MCF 10A (cell line): ENCODE measurements at regions of chr18 and their contacts with region 1.

Region 1: DNA sequence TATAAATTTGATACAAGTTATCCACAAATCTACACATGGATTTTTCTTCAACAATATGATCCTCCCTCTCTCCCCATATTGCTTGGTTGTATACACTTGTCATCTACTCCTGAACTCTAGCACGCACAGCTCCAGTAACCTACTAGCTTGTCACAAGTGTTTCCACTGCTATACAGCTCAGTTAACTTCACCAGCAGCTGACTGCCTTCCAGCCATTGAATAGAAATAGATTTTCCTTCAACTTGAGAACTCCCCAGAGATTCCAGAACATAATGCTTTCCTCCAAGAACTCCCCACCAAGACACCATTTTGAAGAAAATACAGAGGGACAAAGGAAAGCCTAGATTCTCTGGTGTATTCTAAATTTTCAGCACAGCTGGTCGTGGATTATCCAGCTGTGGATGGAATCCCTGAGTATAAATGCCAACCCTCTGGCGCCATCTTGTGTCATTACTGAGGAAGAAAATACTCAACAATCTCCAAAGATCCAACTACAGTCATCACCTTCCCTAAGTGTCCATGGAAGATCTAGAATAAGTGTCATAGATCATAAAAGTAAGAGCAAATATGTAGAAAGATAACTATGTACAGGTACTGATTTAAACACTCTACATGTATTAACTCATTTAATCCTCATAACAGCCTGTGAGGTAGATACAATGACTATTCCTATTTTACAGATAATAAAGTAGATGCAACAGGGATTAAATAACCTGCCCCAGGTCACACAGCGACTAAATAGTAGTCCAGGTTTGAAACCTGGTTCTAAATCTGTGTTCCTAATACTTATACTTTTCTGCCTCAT is 156.7 kb downstream of the ARHGAP28 start:
- DNase-seq: peak; percentile 69
- H3K4me3 Mint-ChIP-seq: no peak overlapping the region
- H3K27ac Mint-ChIP-seq: no peak overlapping the region
- H3K4me1 Mint-ChIP-seq: peaks cover 6% of the 10 kb centered on the region
- H3K27me3 Mint-ChIP-seq: no peaks in the 10 kb centered on the region
- CTCF ChIP-seq: peak; percentile 81

Region 2: GRCh38 chr18:5868218-5869115 is 1017.7 kb before region 1 on chr18:
- CTCF ChIA-PET with region 1: interaction called, 10 read pairs
- POLR2A ChIA-PET with region 1: no interaction called
- intact Hi-C with region 1: loop called (anchors 1 kb)
- DNase-seq: peak; percentile 42
- H3K4me3 Mint-ChIP-seq: no peak overlapping the region
- H3K27ac Mint-ChIP-seq: no peak overlapping the region
- H3K4me1 Mint-ChIP-seq: no peaks in the 10 kb centered on the region
- H3K27me3 Mint-ChIP-seq: peaks cover 20% of the 10 kb centered on the region
- CTCF ChIP-seq: peak; percentile 79

Region 3: GRCh38 chr18:6333981-6334380 is 552.2 kb before region 1 on chr18:
- CTCF ChIA-PET with region 1: no interaction called
- POLR2A ChIA-PET with region 1: no interaction called
- intact Hi-C with region 1: no loop called
- DNase-seq: no peak
- H3K4me3 Mint-ChIP-seq: no peak overlapping the region
- H3K27ac Mint-ChIP-seq: no peak overlapping the region
- H3K4me1 Mint-ChIP-seq: no peaks in the 10 kb centered on the region
- H3K27me3 Mint-ChIP-seq: no peaks in the 10 kb centered on the region
- CTCF ChIP-seq: no peak

Region 4: DNA sequence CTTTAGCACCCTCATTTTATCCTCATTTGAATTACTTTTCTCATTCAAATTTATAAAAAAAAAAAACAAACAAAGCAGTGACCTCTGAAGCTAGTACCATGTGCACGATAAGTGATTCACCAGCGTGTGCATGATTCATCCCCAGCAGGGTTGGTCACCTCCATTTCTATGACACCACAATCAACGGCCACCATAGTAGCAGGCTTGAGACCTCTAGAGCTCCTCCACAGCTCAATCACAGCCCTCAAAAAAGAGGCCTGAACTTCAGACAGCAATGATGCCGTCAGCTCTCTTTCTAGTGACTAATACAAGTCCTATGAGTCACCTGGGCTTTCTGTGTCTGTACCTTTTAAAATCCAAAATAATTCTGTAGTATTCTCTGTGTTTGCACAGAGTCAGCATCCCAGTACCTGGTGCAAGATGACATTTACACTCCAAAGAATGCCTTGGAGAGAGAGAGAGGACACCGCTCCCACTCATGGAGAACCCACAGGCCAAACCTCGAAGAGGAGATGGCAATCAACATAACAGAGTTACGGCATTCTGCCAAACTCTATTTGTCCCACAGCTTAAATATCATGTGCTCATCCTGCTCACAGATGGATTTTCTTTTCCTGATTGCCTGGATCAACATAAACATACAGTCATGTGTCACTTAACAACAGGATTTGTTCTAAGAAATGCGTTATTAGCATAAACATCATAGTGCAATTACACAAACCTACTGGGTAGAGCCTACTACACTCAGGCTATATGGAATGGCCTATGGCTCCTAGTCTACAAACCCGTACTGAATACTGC is 530.2 kb before region 1 on chr18:
- CTCF ChIA-PET with region 1: interaction called, 3 read pairs
- POLR2A ChIA-PET with region 1: no interaction called
- intact Hi-C with region 1: loop called (anchors 10 kb)
- DNase-seq: no peak
- H3K4me3 Mint-ChIP-seq: no peak overlapping the region
- H3K27ac Mint-ChIP-seq: no peak overlapping the region
- H3K4me1 Mint-ChIP-seq: no peaks in the 10 kb centered on the region
- H3K27me3 Mint-ChIP-seq: no peaks in the 10 kb centered on the region
- CTCF ChIP-seq: no peak

Region 5: DNA sequence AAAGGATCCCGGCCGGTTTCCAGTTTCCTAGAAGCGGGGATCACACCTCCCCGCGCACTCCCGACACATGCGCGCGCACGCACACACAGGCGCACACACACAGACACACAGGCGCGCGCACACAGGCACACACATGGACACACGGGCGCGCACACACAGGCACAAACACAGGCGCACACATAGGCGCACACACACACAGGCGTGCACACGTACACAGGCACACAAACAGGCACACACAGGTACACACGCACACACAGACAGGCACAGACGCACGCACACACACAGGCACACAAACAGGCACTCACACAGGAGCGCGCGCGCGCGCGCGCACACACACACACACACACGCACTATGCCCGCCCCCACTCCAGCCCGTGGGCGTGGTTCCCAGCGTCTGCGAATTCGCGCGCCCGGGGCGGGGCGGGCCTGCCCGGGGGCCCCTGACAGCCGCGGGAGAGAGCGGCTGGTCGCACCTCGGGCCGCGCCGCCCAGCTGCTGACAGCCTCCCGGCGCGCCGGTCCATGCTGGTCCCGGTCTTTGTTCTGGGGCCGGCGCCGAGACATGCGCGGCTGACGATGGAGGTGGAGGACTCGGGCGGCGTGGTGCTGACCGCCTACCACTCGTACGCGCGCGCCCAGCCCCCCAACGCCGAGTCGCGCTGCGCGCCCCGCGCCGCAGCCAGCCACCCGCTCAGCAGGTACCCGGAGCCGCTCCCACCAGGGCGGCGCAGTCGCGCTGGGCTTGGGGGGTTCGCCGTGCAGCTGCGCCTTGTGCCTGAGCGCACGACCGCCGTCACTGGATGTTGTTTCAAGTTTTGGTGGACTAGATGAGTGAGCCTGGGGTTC is 156.7 kb before region 1 on chr18 and contains the start of gene ARHGAP28:
- CTCF ChIA-PET with region 1: interaction called, 6 read pairs
- POLR2A ChIA-PET with region 1: no interaction called
- intact Hi-C with region 1: loop called (anchors 5 kb)
- DNase-seq: peak; percentile 80
- H3K4me3 Mint-ChIP-seq: peak within 1 kb of the TSS; percentile 93
- H3K27ac Mint-ChIP-seq: peak within 1 kb of the TSS; percentile 80
- H3K4me1 Mint-ChIP-seq: peaks cover 19% of the 10 kb centered on the region
- H3K27me3 Mint-ChIP-seq: no peaks in the 10 kb centered on the region
- CTCF ChIP-seq: no peak
- total RNA-seq, gene ARHGAP28: 1.9 and 3.0 TPM in 2 replicates

Region 6: DNA sequence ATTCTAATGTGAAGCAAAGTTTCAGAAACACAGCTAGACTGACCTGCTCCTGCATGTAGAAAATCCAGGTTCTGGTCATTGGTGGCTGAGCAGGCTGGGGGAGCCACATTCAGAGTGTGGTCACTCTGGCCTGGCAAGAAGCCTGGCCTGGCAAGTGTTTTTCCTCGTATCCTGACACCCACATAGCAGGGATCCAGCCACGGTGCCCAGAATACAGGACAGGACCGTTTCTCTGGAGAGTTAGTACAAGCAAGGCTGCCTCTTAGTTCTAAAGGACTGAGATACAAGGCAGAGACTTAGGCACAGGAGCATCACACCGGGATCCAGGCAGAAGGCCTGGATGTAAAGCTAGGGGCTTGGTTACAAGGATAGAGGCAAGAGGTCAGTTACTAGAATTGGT is 236.2 kb after region 1 on chr18:
- CTCF ChIA-PET with region 1: no interaction called
- POLR2A ChIA-PET with region 1: no interaction called
- intact Hi-C with region 1: no loop called
- DNase-seq: no peak
- H3K4me3 Mint-ChIP-seq: no peak overlapping the region
- H3K27ac Mint-ChIP-seq: no peak overlapping the region
- H3K4me1 Mint-ChIP-seq: no peaks in the 10 kb centered on the region
- H3K27me3 Mint-ChIP-seq: no peaks in the 10 kb centered on the region
- CTCF ChIP-seq: no peak